Common myeloid progenitor, CD34-positive (primary cell): ENCODE measurements at regions of chr1 and their contacts with region 1.

Region 1: GRCh38 chr1:9629445-9630201 is 21.9 kb upstream of the PIK3CD start:
- DNase-seq: peak; percentile 80 to 94 (median 92)
- H3K4me3 ChIP-seq: peak overlapping the region; percentile 35 to 78 (median 71)
- H3K27ac ChIP-seq: peak overlapping the region; percentile 61 to 84
- H3K4me1 ChIP-seq: peaks cover 1 to 66% (median 57%) of the 10 kb centered on the region in 4 experiments
- H3K27me3 ChIP-seq: no peaks in the 10 kb centered on the region

Region 2: DNA sequence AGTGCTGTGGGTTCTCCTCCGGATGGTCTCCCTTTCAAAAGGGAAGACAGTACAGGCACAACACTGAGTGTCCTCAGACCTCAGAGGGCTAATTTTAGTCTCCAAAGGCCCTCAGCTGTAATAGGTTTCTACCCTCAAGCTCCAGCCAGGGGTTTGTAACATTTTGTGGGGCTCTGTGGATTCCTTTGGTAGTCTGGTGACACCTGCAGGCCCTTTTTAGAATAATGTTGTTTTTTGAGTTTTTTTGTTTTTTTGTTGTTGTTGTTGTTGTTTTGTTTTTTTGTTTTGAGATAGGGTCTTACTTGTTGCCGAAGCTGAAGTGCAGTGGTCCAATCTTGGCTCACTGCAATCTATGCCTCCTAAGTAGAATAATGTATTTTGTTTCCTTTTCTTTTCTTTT is 55.9 kb before region 1 on chr1:
- CTCF ChIA-PET with region 1: no interaction called
- POLR2A ChIA-PET with region 1: no interaction called
- DNase-seq: peak; percentile 31 to 57 (median 52)
- H3K4me3 ChIP-seq: no peak overlapping the region
- H3K27ac ChIP-seq: no peak overlapping the region
- H3K4me1 ChIP-seq: no peaks in the 10 kb centered on the region
- H3K27me3 ChIP-seq: no peaks in the 10 kb centered on the region

Region 3: GRCh38 chr1:9615316-9616063 is 14.1 kb before region 1 on chr1:
- CTCF ChIA-PET with region 1: interaction called, 11 read pairs
- POLR2A ChIA-PET with region 1: no interaction called
- DNase-seq: peak; percentile 70 to 85 (median 83)
- H3K4me3 ChIP-seq: no peak overlapping the region
- H3K27ac ChIP-seq: no peak overlapping the region
- H3K4me1 ChIP-seq: peaks cover 0 to 6% (median 3%) of the 10 kb centered on the region in 4 experiments
- H3K27me3 ChIP-seq: no peaks in the 10 kb centered on the region

Region 4: DNA sequence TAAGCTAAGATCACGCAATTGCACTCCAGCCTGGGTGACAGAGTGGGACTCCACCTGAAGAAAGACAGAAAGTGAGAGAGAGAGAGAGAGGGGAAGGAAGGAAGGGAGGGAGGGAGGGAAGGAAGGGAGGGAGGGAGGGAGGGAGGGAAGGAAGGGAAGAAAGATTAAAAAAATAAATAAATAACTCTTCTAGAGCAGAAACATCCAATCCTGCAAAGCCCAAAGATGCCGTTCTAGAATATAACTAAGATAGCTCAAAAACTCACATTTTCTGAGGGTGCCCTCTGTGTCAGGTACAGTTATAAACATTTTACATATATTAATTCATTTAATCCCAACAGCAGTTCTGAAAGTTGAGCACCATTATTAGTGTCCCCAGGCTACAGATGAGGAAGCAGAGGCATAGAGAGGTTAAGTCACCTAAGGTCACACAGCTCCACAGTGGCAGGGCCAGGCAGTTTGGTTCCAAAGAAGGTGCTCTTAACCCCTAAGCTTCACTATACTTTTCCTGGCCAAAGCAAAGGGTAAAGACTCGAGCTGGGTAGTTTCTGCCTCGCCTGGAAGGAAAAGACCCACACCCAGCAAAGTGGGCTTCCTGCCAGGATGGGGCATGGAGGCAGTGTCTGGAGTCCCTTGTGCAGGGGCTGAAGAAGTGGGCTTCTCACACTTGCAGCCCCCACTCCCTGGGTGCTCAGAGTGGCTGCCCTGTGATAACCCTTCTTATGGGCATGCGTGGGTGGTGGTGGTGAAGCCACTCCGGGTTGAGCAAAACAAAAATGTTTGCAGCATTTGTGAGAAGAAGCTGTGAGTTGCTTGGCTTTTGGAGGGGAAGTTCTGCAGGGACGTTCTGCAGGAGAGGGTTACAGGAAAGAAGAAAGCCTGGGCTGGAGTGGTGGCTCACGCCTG is 14.0 kb after region 1 on chr1:
- CTCF ChIA-PET with region 1: interaction called, 48 read pairs
- POLR2A ChIA-PET with region 1: interaction called, 3 read pairs
- DNase-seq: peak in 1 of 3 donors; percentile 31
- H3K4me3 ChIP-seq: peak overlapping the region in 3 of 7 experiments; percentile 13 to 33 (median 32)
- H3K27ac ChIP-seq: no peak overlapping the region
- H3K4me1 ChIP-seq: peaks cover 10 to 48% (median 23%) of the 10 kb centered on the region in 4 experiments
- H3K27me3 ChIP-seq: no peaks in the 10 kb centered on the region

Region 5: DNA sequence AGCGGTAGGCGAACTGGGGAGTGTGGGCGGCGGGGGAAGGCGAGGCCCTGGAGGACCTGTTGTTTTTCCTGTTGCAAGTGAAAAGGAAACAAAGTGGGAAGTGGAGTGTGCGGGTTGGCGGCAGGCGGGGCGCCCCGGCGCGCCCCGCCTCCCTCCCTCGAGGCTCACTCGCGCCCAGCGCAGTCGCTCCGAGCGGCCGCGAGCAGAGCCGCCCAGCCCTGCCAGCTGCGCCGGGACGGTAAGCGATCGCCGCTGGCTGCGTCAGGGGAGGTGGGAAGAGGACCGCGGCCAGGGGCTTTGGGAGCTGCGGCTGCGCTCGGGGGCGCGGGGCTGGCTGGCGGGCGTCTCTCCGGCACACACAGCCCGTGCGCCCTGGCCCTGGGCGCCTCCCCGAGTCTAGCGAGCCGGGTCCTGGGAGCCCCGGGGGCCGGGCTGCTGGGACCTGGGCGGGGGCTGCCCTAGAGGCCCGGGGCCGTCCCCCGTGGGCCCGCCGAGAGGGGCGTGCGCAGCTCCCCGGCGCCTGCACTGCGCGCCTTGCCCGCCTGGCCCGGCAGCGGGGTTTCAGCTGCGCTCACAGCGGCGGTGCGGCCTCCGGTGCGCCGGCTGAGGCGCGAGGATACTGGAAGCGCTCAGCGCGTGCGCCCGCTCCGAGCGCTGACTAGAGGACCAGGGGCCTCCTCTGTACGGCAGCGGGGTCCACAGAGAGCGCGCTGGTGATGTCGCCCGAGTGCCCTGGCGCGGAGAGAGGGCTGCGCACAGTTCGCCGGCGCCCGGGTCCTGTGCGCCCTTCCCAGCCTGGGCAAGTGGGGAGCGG is 22.1 kb after region 1 on chr1 and contains the start of gene PIK3CD:
- CTCF ChIA-PET with region 1: interaction called, 78 read pairs
- POLR2A ChIA-PET with region 1: interaction called, 21 read pairs
- DNase-seq: peak; percentile 40 to 75 (median 65)
- H3K4me3 ChIP-seq: peak within 1 kb of the TSS; percentile 48 to 91 (median 83)
- H3K27ac ChIP-seq: peak within 1 kb of the TSS; percentile 40 to 66
- H3K4me1 ChIP-seq: peaks cover 2 to 60% (median 44%) of the 10 kb centered on the region in 4 experiments
- H3K27me3 ChIP-seq: no peaks in the 10 kb centered on the region

Region 6: GRCh38 chr1:9689011-9689706 is 59.5 kb after region 1 on chr1:
- CTCF ChIA-PET with region 1: interaction called, 59 read pairs
- POLR2A ChIA-PET with region 1: interaction called, 4 read pairs
- DNase-seq: peak; percentile 37 to 70 (median 59)
- H3K4me3 ChIP-seq: peak overlapping the region; percentile 23 to 80 (median 52)
- H3K27ac ChIP-seq: no peak overlapping the region
- H3K4me1 ChIP-seq: peaks cover 19 to 59% (median 55%) of the 10 kb centered on the region in 4 experiments
- H3K27me3 ChIP-seq: no peaks in the 10 kb centered on the region

Region 7: GRCh38 chr1:9724706-9725476 is 95.3 kb after region 1 on chr1:
- CTCF ChIA-PET with region 1: interaction called, 52 read pairs
- POLR2A ChIA-PET with region 1: no interaction called
- DNase-seq: peak; percentile 52 to 72 (median 68)
- H3K4me3 ChIP-seq: no peak overlapping the region
- H3K27ac ChIP-seq: no peak overlapping the region
- H3K4me1 ChIP-seq: no peaks in the 10 kb centered on the region
- H3K27me3 ChIP-seq: no peaks in the 10 kb centered on the region

Region 8: DNA sequence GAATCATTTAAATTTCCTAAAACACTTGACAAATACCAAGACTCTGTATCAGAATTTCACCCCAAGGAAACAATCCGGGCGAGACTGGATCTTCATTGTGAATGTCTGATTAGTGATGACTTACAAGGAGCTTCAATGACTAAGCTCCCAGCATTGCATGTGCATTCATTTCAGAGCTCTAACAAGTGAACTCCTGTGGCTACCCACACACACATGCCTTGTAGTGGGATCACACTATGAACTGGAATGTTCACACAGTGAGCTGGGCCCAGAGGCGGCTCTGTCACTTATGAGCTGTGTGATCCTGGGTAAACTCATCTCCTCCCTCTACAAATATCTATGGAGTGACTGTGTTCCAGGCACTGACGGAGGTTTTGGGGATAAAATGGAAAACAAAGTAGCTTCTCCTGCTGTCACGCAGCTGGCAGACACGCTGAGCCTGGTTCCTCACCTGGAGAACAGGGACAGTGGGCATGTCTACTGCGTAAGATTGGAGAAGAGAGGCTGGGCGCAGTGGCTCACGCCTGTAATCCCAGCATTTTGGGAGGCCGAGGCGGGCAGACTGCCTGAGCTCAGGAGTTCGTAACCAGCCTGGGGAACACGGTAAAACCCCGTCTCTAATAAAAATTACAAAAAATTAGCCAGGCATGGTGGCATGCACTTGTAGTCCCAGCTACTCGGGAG is 137.3 kb after region 1 on chr1:
- CTCF ChIA-PET with region 1: no interaction called
- POLR2A ChIA-PET with region 1: no interaction called
- DNase-seq: no peak
- H3K4me3 ChIP-seq: no peak overlapping the region
- H3K27ac ChIP-seq: no peak overlapping the region
- H3K4me1 ChIP-seq: peaks cover 0 to 5% (median 2%) of the 10 kb centered on the region in 4 experiments
- H3K27me3 ChIP-seq: no peaks in the 10 kb centered on the region